ENCODE measurements at regions of chr1 and their contacts with region 1.

Region 1: GRCh38 chr1:24847995-24848881 is 81.8 kb downstream of the RUNX3 start:
- DNase-seq: peak; percentile 94
- ATAC-seq: peak; percentile 95
- H3K4me3 Mint-ChIP-seq: peak overlapping the region; percentile 58
- H3K27ac Mint-ChIP-seq: no peak overlapping the region
- H3K4me1 Mint-ChIP-seq: peaks cover 8% of the 10 kb centered on the region
- H3K27me3 Mint-ChIP-seq: no peaks in the 10 kb centered on the region

Region 2: DNA sequence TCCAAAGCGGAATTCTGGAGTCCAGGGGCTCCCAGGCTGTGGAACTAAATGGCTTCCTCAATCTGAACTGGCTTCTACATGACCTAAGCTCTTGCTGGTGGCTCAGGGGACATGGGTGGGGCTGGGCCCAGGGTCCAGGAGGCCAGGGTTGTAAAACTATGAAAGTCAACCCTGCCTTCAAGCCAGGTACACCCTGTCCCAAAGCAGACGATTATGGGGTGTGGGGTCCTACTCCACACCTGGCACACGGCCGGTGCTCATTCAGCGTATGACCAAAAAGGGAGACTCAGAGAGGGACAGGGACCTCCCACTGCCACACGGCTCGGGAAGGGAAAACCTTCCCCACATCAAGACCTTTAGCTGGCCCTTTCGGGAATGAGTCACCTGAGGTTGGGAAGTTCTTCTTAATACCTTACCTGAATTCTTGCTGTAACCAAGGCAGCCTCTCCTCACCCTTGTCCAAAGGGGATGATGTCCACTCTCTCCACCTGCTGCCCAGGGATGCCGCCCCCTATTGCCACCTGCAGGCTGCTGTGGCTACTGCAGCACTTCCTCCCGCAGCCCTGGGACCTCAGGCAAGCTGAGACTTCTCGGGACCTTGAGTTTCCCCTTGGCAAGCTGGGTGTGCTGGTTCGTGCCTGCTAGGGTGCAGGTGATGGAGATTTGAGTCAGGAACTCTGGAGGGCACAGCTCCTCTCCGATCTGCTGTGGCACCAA is 49.7 kb after region 1 on chr1:
- CTCF ChIA-PET with region 1: interaction called, 8 read pairs
- POLR2A ChIA-PET with region 1: no interaction called
- intact Hi-C with region 1: loop called (anchors 1 to 2 kb)
- DNase-seq: peak; percentile 79
- ATAC-seq: peak; percentile 45
- H3K4me3 Mint-ChIP-seq: peak overlapping the region; percentile 43
- H3K27ac Mint-ChIP-seq: no peak overlapping the region
- H3K4me1 Mint-ChIP-seq: peaks cover 17% of the 10 kb centered on the region
- H3K27me3 Mint-ChIP-seq: no peaks in the 10 kb centered on the region

Region 3: GRCh38 chr1:25037174-25038074 is 189.2 kb after region 1 on chr1:
- CTCF ChIA-PET with region 1: interaction called, 21 read pairs
- POLR2A ChIA-PET with region 1: no interaction called
- intact Hi-C with region 1: loop called (anchors 1 to 2 kb)
- DNase-seq: peak; percentile 86
- ATAC-seq: peak; percentile 55
- H3K4me3 Mint-ChIP-seq: no peak overlapping the region
- H3K27ac Mint-ChIP-seq: peak overlapping the region; percentile 27
- H3K4me1 Mint-ChIP-seq: peaks cover 35% of the 10 kb centered on the region
- H3K27me3 Mint-ChIP-seq: no peaks in the 10 kb centered on the region

Region 4: DNA sequence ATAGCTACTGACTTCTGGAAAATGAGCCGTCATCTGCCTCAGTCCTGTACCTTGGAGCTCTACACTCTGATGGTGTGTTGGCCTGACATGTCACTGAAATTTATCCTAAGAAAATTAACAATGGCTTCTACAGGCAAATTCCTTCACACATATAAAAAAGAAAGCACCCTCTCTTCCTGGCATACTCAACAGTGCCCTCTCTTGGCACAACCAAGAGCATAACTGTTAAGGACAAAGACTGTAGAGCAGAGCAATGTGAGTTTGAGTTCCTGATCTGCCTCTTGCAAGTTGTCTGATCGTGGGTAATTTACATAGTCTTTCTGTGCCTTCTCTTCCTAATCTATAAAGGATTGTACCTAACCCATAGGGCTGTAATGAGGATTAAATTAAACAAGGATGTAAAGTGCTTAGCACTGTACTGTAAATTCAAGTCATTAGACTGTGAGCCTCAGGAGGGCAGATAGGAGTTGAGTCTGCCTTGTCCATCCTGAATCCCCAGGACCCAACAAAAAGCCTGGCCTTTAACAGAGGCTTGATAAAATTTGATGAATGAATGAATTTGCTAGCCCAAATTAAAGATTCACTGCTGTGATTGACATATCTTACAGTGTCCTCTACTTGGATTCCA is 300.5 kb after region 1 on chr1:
- CTCF ChIA-PET with region 1: interaction called, 15 read pairs
- POLR2A ChIA-PET with region 1: no interaction called
- intact Hi-C with region 1: loop called (anchors 1 to 2 kb)
- DNase-seq: peak; percentile 56
- ATAC-seq: peak; percentile 86
- H3K4me3 Mint-ChIP-seq: no peak overlapping the region
- H3K27ac Mint-ChIP-seq: no peak overlapping the region
- H3K4me1 Mint-ChIP-seq: no peaks in the 10 kb centered on the region
- H3K27me3 Mint-ChIP-seq: peaks cover 22% of the 10 kb centered on the region

Measured in activated CD4-positive, alpha-beta T cell treated with anti-CD3 and anti-CD28 coated beads for 36 hours (primary cell).